Ascending aorta (tissue), 2 donors: ENCODE measurements at regions of chr2 and their contacts with region 1.

Region 1: DNA sequence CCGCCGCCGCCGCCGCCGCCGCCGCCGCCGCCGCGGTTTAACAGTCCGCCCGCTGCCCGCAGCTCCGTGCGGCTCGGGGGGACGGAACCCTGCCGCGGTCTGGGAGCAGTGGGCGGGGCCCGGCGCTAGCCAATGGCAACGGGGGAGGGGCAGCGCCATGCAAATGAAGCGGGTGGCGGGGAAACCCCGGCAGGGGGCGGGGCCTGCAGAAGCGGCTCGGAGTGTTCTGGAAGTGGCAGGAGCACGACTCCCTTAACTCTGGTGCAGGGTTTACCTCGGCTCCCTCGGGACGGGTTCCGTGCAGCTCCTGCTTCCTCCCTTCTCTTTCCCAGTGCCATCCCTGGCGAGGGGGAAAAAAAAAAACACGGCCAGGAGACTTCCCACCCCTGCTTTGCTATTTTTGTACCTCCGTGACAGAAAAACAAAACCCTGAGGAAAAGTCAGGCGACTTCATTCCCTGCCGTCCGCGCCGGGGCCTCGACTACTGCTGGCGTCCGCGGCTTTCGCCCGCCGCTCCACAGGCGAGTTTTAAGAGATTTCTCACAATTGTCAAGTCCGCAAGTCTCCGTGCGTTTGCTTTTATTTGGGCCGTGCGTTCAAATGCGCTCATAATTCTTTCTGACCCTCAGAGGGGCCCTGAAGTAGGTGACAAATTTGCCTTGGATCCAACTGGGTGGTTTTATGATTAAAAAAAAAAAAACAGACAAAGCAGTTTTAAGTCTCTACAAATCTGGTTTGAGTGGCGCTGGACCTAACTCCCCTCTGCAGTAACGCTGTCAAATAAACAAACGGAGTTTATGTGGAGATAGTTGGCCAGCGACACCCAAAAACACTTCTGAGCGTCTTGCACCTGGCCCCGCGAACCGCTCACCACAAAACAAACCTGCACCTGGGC is at the start of gene KANSL1L:
- DNase-seq: peak; percentile 94 to 99
- H3K4me3 ChIP-seq: peak within 1 kb of the TSS; percentile 79 to 99
- H3K27ac ChIP-seq: peak within 1 kb of the TSS; percentile 98 to 100
- H3K4me1 ChIP-seq: peaks cover 6 to 19% of the 10 kb centered on the region in 2 donors
- H3K27me3 ChIP-seq: no peaks in the 10 kb centered on the region
- CTCF ChIP-seq: no peak
- total RNA-seq, gene KANSL1L: 39.6 TPM

Region 2: GRCh38 chr2:210002158-210003157 is 169.1 kb before region 1 on chr2 and contains the start of gene RPE:
- intact Hi-C with region 1: loop called (anchors 1 kb)
- DNase-seq: peak; percentile 81 to 97
- H3K4me3 ChIP-seq: peak within 1 kb of the TSS; percentile 87 to 91
- H3K27ac ChIP-seq: peak within 1 kb of the TSS; percentile 66 to 67
- H3K4me1 ChIP-seq: peaks cover 0 to 29% of the 10 kb centered on the region in 2 donors
- H3K27me3 ChIP-seq: no peaks in the 10 kb centered on the region
- CTCF ChIP-seq: no peak
- total RNA-seq, gene RPE: 45.0 TPM